ENCODE measurements at regions of chr19 and their contacts with region 1.

Region 1: DNA sequence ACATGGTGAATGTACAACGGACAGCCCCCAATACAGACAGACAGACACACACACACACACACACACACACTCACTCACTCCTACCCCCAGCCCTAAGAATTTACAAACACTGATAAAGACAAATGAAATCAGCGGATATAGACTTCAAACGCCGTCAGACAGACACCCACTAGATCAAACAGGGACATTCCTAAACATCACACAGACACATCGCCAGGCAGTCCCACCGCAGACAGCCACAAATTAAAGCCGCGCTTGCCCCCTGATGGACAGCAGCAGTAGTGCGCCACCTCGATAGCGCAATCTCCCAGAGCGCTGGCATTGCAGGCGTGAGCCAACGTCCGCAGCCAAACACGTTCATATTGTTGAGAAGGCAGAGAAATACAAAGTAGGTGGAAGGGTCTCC is 24.7 kb upstream of the ADGRE1 start:
- DNase-seq: peak; percentile 89
- H3K4me3 Mint-ChIP-seq: peak overlapping the region; percentile 68
- H3K27ac Mint-ChIP-seq: peak overlapping the region; percentile 27
- H3K4me1 Mint-ChIP-seq: peaks cover 16% of the 10 kb centered on the region
- H3K27me3 Mint-ChIP-seq: peaks cover 23% of the 10 kb centered on the region
- CTCF ChIP-seq: peak; percentile 88

Region 2: GRCh38 chr19:6362027-6362350 is 500.7 kb before region 1 on chr19:
- CTCF ChIA-PET with region 1: no interaction called
- POLR2A ChIA-PET with region 1: no interaction called
- intact Hi-C with region 1: loop called (anchors 10 kb)
- DNase-seq: no peak
- H3K4me3 Mint-ChIP-seq: peak overlapping the region; percentile 92
- H3K27ac Mint-ChIP-seq: peak overlapping the region; percentile 74
- H3K4me1 Mint-ChIP-seq: peaks cover 16% of the 10 kb centered on the region
- H3K27me3 Mint-ChIP-seq: no peaks in the 10 kb centered on the region
- CTCF ChIP-seq: no peak

Region 3: GRCh38 chr19:6564393-6564792 is 298.3 kb before region 1 on chr19:
- CTCF ChIA-PET with region 1: interaction called, 6 read pairs
- POLR2A ChIA-PET with region 1: no interaction called
- intact Hi-C with region 1: loop called (anchors 1 kb)
- DNase-seq: peak; percentile 66
- H3K4me3 Mint-ChIP-seq: no peak overlapping the region
- H3K27ac Mint-ChIP-seq: no peak overlapping the region
- H3K4me1 Mint-ChIP-seq: no peaks in the 10 kb centered on the region
- H3K27me3 Mint-ChIP-seq: no peaks in the 10 kb centered on the region
- CTCF ChIP-seq: no peak

Region 4: DNA sequence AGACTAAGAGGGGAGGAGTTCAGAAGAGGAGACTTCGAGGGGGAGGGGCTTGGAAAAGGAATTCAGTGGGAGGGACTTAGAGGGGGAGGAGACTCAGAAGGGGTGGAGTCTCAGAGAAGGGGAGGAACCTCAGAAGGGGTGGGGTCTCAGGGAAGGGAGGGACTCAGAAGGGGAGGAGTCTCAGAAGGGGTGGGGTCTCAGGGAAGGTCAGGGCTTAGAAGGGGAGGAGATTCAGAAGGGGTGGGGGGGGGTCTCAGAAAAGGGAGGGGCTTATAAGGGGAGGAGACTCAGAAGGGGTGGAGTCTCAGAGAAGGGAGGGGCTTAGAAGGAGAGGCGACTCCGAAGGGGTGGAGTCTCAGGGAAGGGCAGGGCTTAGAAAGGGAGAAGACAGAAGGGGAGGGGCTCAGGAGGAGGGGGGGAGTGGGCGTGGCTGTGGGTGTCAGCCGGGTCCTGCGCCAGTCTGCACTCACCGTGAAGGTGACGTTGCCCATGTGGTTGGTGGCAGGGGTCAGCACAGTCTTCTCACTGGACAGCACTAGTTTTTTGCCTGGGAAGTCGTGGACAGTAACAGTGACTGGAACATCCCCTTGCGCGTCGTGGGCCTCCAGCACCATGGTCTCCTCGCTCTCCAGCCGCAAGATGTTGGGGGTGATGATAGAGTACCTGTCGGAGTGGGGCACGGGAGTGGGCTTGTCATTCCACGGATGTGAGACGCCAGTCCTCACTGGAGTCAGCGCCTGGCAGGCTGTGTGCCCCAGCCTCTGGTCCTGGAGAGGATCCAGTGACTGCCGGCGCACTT is 143.7 kb before region 1 on chr19:
- CTCF ChIA-PET with region 1: interaction called, 14 read pairs
- POLR2A ChIA-PET with region 1: interaction called, 17 read pairs
- intact Hi-C with region 1: loop called (anchors 5 kb)
- DNase-seq: peak; percentile 92
- H3K4me3 Mint-ChIP-seq: peak overlapping the region; percentile 95
- H3K27ac Mint-ChIP-seq: peak overlapping the region; percentile 82
- H3K4me1 Mint-ChIP-seq: peaks cover 47% of the 10 kb centered on the region
- H3K27me3 Mint-ChIP-seq: no peaks in the 10 kb centered on the region
- CTCF ChIP-seq: no peak

Region 5: GRCh38 chr19:6744381-6745291 is 118.0 kb before region 1 on chr19:
- CTCF ChIA-PET with region 1: interaction called, 102 read pairs
- POLR2A ChIA-PET with region 1: interaction called, 94 read pairs
- intact Hi-C with region 1: no loop called
- DNase-seq: peak; percentile 98
- H3K4me3 Mint-ChIP-seq: peak overlapping the region; percentile 60
- H3K27ac Mint-ChIP-seq: peak overlapping the region; percentile 28
- H3K4me1 Mint-ChIP-seq: peaks cover 28% of the 10 kb centered on the region
- H3K27me3 Mint-ChIP-seq: no peaks in the 10 kb centered on the region
- CTCF ChIP-seq: no peak

Region 6: DNA sequence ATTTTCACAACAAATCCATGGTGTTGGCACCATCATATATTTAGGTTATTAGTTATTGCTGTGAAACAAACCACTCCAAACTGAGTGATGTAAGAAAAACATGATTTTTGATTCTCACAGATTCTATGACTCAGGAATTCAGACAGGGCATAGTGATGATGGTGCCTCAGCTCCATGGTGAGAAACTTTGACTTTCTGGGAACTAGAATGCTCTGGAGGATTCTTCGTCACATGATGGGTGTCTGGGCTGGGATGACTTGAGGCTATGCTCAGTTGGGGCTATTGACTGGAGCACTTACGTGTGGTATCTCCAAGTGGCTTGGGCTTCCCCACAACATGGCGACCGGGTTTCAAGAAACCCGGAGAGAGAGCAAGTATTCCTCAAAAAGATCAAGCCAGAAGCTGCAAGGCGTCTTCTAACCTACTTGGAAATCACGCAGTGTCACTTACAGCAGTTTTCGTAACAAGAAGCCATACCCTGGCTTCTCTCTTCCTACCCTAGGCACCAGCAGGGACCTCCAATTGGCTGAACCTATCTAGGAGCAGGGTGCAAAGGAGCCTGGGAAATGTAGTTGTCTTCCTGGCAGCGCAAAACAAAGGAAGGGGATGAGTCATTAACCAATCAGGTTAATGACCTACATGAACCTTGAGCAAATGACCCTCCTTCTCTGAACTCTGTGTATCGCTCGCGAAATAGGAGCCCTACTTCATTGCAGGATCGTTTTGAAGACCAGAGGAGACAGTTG is 67.8 kb before region 1 on chr19:
- CTCF ChIA-PET with region 1: no interaction called
- POLR2A ChIA-PET with region 1: no interaction called
- intact Hi-C with region 1: no loop called
- DNase-seq: no peak
- H3K4me3 Mint-ChIP-seq: no peak overlapping the region
- H3K27ac Mint-ChIP-seq: no peak overlapping the region
- H3K4me1 Mint-ChIP-seq: no peaks in the 10 kb centered on the region
- H3K27me3 Mint-ChIP-seq: peaks cover 19% of the 10 kb centered on the region
- CTCF ChIP-seq: no peak

Measured in MCF 10A (cell line).